BJ (cell line): ENCODE measurements at regions of chr12 and their contacts with region 1.

Region 1: GRCh38 chr12:2944401-2945047 is 14.7 kb upstream of the TEAD4 start:
- DNase-seq: no peak
- H3K4me3 ChIP-seq: no peak overlapping the region
- H3K27me3 ChIP-seq: no peaks in the 10 kb centered on the region
- CTCF ChIP-seq: peak; percentile 77

Region 2: DNA sequence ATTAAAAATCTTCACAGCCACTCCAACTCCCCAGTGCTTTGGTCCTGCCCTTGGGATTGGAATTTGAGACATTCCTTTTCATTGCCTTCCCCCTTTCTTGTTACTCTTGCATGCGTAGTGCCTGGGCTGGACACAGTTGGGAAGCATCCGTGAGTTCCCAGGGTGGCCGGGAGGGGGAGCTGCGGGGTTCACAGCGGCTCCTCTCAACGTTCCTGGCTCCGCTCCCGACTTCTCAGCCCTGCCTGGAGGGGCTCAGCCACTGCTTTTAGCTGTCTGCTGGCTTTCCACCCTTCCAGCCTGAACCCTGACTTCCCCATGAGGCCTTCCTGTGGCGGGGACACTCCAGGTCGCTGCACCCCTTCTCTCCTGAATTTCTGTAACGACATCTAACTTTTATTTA is 90.9 kb before region 1 on chr12:
- CTCF ChIA-PET with region 1: interaction called, 18 read pairs
- POLR2A ChIA-PET with region 1: no interaction called
- DNase-seq: no peak
- H3K4me3 ChIP-seq: no peak overlapping the region
- H3K27me3 ChIP-seq: no peaks in the 10 kb centered on the region
- CTCF ChIP-seq: peak; percentile 95